Esophagus muscularis mucosa (tissue), 4 donors: ENCODE measurements at regions of chr3 and their contacts with region 1.

Region 1: DNA sequence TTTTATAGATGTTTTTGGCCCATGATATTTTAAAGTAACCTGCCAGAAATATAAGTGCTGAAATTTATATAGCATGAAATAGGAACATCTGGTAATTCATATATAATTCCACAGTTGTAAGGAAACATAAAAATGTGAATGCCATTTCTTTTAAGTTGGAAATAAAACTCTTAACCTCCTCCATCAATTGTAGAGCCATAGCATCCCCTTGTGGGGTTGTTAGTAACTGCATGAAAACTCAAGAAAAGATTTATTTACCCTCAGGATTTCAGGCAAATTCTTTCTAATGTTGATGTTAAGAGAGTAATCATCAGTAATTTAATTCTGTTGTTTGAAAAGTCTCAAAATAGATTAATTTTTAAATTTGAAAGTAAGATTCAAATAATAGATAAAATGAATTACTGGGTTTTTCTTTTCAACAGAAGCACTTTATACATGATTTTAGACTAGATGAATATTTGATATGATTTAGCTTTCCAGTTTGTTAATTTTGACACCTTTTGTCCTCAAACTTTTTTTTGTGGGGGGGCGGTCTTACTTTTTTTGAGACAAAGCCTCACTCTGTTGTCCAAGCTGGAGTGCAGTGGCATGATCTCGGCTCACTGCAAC is 74.7 kb downstream of the RASA2 start:
- DNase-seq: no peak
- H3K4me3 ChIP-seq: no peak overlapping the region
- H3K27ac ChIP-seq: no peak overlapping the region
- H3K4me1 ChIP-seq: peaks cover 0 to 11% (median 2%) of the 10 kb centered on the region in 4 donors
- H3K27me3 ChIP-seq: no peaks in the 10 kb centered on the region
- CTCF ChIP-seq: peak; percentile 96 to 98 (median 98)
- EP300 ChIP-seq: no peak
- POLR2A ChIP-seq: no peak

Region 2: DNA sequence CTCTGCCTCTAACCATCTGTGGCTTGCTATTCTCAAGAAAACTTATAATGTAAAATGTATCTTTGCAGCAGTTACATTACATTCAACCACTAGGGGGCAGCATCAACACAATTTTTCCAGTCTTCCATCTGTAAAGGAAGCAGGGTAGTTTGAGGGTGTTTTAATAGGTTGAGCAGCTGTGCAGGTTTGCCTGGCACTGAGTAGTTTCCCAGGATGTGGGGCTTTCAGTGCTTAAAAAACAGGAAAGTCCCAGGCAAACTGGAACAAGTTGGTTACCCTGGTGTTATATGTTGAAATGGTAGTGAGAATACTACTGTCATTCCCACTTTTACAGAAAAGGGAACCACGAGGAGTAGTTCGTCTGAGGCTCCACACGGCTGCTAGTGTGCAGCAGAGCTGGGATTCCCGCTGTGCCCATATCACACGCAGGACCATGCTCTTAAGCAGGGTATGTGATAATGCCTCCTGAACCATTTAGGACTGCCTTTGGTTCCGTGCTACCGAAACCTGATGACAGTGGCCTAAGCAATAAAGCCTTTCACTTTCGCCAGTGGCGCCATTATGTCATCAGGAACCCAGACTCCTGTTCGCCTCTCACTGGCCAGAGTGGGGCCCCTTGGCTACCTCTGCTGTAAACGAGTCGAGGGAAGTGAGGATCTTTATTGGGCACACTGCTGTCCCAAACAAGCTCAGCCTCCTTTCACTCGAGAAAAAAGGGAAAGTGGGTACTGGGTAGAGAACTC is 257.9 kb before region 1 on chr3:
- intact Hi-C with region 1: loop called (anchors 5 kb)
- DNase-seq: no peak
- H3K4me3 ChIP-seq: no peak overlapping the region
- H3K27ac ChIP-seq: no peak overlapping the region
- H3K4me1 ChIP-seq: peaks cover 0 to 4% (median 0%) of the 10 kb centered on the region in 4 donors
- H3K27me3 ChIP-seq: no peaks in the 10 kb centered on the region
- CTCF ChIP-seq: peak; percentile 70 to 81 (median 79)
- EP300 ChIP-seq: no peak
- POLR2A ChIP-seq: no peak

Region 3: GRCh38 chr3:141353652-141354495 is 207.7 kb before region 1 on chr3:
- intact Hi-C with region 1: loop called (anchors 10 kb)
- DNase-seq: no peak
- H3K4me3 ChIP-seq: no peak overlapping the region
- H3K27ac ChIP-seq: no peak overlapping the region
- H3K4me1 ChIP-seq: no peaks in the 10 kb centered on the region
- H3K27me3 ChIP-seq: no peaks in the 10 kb centered on the region
- CTCF ChIP-seq: no peak
- EP300 ChIP-seq: no peak
- POLR2A ChIP-seq: no peak

Region 4: GRCh38 chr3:141460097-141460704 is 101.3 kb before region 1 on chr3:
- intact Hi-C with region 1: loop called (anchors 2 kb)
- DNase-seq: peak; percentile 95
- H3K4me3 ChIP-seq: no peak overlapping the region
- H3K27ac ChIP-seq: no peak overlapping the region
- H3K4me1 ChIP-seq: peaks cover 0 to 18% (median 7%) of the 10 kb centered on the region in 4 donors
- H3K27me3 ChIP-seq: no peaks in the 10 kb centered on the region
- CTCF ChIP-seq: peak; percentile 80 to 90 (median 89)
- EP300 ChIP-seq: no peak
- POLR2A ChIP-seq: no peak

Region 5: GRCh38 chr3:141789281-141789680 is 227.8 kb after region 1 on chr3:
- intact Hi-C with region 1: no loop called
- DNase-seq: no peak
- H3K4me3 ChIP-seq: no peak overlapping the region
- H3K27ac ChIP-seq: no peak overlapping the region
- H3K4me1 ChIP-seq: no peaks in the 10 kb centered on the region
- H3K27me3 ChIP-seq: no peaks in the 10 kb centered on the region
- CTCF ChIP-seq: no peak
- EP300 ChIP-seq: no peak
- POLR2A ChIP-seq: no peak